ENCODE measurements at regions of chr11 and their contacts with region 1.

Region 1: DNA sequence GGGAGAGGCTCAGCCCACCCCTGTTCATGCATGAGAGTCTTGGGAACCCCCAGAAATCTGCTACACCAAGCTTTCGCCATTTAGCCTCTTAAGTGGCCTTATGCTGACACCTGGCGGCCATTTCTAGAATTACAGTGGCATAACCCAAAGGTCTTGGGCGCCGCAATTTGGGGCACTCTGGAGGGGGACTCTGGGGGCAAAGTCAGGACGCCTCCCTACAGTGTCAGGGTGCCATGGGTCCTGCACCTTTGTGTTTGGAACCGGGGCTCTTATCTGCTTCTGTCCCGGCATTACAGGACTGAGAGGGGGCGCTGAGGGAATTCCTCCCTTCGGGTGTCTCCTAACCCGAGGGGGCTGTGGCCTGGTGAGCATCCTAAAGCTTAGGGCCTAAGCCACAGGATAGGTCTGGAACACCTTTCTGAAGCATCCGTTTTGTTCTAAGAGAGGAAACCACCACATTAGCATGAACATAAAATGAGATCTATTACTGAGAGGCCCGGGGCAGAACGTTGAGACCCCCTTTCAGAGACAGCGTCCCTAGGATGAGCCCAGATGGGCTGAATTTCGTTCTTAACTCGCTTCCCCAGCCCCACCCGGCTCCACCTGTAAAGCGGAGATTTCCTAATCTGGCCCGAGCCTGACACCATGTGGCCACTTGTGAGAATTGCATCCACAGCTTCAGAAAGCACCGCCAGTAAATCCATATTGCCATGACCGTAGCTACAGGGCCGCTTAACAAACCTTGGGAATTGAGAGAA is 9.3 kb downstream of the INS start:
- DNase-seq: peak; percentile 36
- H3K4me3 ChIP-seq: no peak overlapping the region
- H3K27ac ChIP-seq: no peak overlapping the region
- H3K4me1 ChIP-seq: no peaks in the 10 kb centered on the region
- H3K27me3 ChIP-seq: peaks cover 32% of the 10 kb centered on the region
- CTCF ChIP-seq: peak; percentile 81

Region 2: DNA sequence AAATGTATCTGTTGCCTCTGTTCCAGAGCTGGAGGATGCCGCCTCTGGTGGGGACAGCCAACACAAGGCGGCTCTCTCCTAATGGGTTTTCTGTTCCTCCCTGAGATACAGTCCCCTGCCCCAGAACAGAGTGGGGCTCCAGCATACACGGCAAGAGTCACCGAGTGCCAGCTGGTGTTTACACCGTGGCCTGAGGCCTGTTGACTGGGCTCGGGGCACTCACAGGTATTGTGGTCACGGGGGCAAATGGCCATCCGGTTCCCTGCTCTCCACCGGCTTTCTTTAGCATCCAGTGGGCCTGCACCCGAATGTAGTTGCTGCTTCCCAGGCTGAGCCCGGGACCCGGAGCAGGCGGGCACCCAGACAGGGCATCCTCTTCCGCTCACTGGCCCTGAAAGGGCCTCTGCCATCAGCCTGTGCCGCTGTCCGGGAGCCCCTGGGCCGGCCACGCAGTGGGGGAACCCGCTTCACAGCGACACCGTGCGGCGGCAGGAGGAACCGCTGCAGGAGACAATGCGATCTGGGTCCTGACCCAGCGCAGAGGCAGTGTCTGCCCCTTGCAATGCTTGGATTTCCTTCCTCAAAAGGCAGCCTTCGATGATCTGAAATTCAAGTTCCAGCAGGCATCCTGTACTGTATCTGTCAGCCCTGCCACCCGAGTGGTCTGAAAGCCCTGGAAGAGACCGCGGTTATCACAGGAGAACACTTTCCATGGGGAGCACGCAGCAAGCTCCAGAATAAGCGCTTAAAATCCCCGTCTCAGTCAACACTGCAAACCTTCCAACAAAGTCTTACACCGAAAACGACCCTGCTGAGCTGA is 523.0 kb before region 1 on chr11:
- CTCF ChIA-PET with region 1: no interaction called
- dilution Hi-C with region 1: loop called (anchors 5 kb)
- in situ Hi-C with region 1: no loop called
- intact Hi-C with region 1: no loop called
- DNase-seq: no peak
- H3K4me3 ChIP-seq: no peak overlapping the region
- H3K27ac ChIP-seq: no peak overlapping the region
- H3K4me1 ChIP-seq: no peaks in the 10 kb centered on the region
- H3K27me3 ChIP-seq: peaks cover 10% of the 10 kb centered on the region
- CTCF ChIP-seq: peak; percentile 78 to 88

Region 3: DNA sequence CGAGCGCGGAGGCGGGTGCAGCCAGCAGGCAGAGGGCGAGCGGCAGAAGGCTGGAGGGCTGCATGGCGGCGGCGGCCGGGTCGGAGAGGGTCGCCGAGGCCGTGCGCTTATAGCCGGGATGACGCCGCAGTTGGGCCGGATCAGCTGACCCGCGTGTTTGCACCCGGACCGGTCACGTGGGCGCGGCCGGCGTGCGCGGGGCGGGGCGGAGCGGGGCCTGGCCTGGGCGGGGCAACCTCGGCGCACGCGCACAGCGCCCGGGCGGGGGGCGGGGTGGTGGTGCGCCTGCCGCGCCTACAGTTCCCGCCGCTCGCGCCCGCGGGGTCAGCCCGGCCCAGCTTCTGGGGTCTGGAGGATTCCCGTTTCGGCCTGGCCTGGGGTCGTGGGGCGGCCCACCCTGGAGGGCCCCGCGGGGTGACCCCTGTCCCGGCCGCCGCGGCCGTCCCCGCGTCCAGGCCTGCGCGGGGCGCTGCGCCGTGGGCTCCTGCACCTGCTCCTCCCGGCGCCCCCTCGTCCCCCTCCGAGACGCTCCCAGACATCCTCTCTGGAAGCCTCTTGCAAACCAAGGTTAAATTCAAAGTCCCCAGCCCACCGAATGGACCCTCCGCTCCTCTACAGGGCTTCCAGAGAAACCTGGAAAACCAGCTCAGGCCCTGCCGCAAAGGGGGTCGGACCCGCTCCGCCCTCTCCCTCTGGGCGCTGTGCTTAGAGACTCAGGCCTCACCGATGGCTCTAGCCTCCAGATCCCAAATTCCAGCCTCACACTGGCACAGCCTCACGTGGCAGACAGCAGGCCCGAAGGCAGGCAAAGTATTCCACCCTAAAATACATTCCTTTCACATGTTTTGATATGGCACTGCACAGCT is 387.6 kb before region 1 on chr11 and contains the start of gene CTSD:
- CTCF ChIA-PET with region 1: no interaction called
- dilution Hi-C with region 1: no loop called
- in situ Hi-C with region 1: no loop called
- intact Hi-C with region 1: loop called (anchors 5 kb)
- DNase-seq: peak; percentile 66
- H3K4me3 ChIP-seq: peak within 1 kb of the TSS; percentile 58 to 93 (median 83)
- H3K27ac ChIP-seq: peak within 1 kb of the TSS; percentile 32
- H3K4me1 ChIP-seq: peaks cover 41% of the 10 kb centered on the region
- H3K27me3 ChIP-seq: no peaks in the 10 kb centered on the region
- CTCF ChIP-seq: no peak
- total RNA-seq, gene CTSD: 550 to 659 TPM

Region 4: DNA sequence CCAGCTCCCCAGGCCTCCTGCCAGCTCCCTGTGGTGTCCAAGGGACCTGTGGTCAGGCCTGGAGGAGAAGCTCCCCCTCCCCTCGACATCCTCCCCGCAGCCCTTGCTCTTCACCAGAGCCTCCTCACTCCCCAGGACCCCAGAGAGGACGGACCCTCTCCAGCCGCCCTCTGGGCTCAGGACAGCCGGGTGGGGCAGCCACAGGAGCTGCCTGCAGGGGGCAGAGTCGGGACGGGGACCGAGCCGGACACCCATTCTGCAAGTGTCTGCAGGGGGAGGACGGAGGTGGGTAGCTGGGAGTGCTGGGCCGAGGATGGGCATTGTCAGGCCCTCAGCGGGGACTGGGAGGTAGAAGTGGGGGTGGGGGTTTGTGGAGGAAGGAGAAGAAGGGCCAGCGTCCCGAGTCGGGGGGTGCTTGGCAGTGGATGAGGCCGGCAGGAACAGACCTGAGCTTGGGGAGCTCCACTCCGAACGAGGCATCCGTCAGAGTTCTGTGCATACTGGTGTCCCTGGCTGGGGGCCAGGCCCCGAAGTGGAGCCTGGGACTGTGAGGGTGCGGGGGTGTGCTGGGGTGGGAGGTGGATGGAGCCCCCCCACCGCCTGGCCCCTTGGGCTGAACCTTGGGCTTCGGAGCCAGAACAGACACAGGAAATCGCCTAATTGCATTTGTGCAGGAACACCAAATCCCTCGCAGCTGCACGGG is 275.2 kb before region 1 on chr11:
- CTCF ChIA-PET with region 1: no interaction called
- dilution Hi-C with region 1: loop called (anchors 5 kb)
- in situ Hi-C with region 1: no loop called
- intact Hi-C with region 1: no loop called
- DNase-seq: no peak
- H3K4me3 ChIP-seq: no peak overlapping the region
- H3K27ac ChIP-seq: no peak overlapping the region
- H3K4me1 ChIP-seq: peaks cover 19% of the 10 kb centered on the region
- H3K27me3 ChIP-seq: no peaks in the 10 kb centered on the region
- CTCF ChIP-seq: peak; percentile 12 to 47

Region 5: GRCh38 chr11:2092956-2093412 is 58.7 kb before region 1 on chr11:
- CTCF ChIA-PET with region 1: no interaction called
- dilution Hi-C with region 1: loop called (anchors 5 kb)
- in situ Hi-C with region 1: no loop called
- intact Hi-C with region 1: no loop called
- DNase-seq: peak; percentile 95
- H3K4me3 ChIP-seq: no peak overlapping the region
- H3K27ac ChIP-seq: no peak overlapping the region
- H3K4me1 ChIP-seq: peaks cover 25% of the 10 kb centered on the region
- H3K27me3 ChIP-seq: peaks cover 25% of the 10 kb centered on the region
- CTCF ChIP-seq: no peak

Region 6: DNA sequence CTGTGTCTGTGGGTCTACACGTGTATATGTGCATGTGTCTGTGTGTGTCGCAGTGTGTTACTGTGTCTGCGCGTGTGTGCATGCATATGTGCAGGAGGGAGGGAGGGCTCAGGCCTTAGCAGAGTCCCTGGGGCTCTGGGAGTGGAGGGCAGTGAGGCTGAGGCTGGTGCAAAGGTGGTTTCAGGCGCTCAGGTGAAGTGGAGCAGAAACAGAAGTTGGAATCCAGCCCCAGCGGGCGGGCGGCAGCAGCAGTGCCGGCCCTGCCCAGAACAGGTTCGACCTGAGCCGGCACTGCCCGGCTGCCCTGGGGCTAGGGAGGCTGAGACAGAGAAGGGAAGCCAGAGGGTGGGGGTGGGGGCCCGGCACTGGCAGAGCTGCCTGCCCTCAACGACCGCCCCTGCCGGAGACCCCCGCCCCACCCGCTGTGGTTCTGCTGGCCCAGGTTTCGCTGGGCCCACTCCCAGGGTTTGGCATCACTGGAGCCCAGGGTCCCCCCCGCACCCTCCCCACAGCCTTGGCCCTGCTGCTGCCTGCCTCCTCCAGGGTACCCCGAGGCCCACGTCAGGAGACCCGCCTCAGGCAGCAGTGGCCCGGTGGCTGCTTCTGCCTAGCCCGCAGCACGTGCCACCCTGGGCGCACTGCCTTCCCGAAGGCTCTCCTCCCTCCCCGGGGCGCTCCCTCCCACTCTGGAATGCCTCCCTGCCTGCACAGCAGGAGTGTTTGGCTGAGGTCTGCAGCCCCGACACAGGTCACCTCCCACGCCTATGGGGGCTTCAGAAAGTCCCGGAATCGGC is 105.4 kb after region 1 on chr11:
- CTCF ChIA-PET with region 1: no interaction called
- dilution Hi-C with region 1: no loop called
- in situ Hi-C with region 1: no loop called
- intact Hi-C with region 1: no loop called
- DNase-seq: peak; percentile 58
- H3K4me3 ChIP-seq: peak overlapping the region in 1 of 3 experiments; percentile 16
- H3K27ac ChIP-seq: no peak overlapping the region
- H3K4me1 ChIP-seq: peaks cover 15% of the 10 kb centered on the region
- H3K27me3 ChIP-seq: no peaks in the 10 kb centered on the region
- CTCF ChIP-seq: no peak